Head of caudate nucleus (tissue), 42 donors: ENCODE measurements at regions of chr10 and their contacts with region 1.

Region 1: GRCh38 chr10:63268798-63269503 is 135.8 kb downstream of the NRBF2 start:
- DNase-seq: peak; percentile 12 to 91 (median 71)

Region 2: GRCh38 chr10:63521416-63522276 is 252.7 kb after region 1 on chr10:
- intact Hi-C with region 1: loop called (anchors 5 kb)
- DNase-seq: peak; percentile 58 to 93 (median 82)